HCT116 (cell line): ENCODE measurements at regions of chr10 and their contacts with region 1.

Region 1: GRCh38 chr10:97072851-97073665 is 112.7 kb downstream of the SLIT1 start:
- DNase-seq: peak; percentile 56
- ATAC-seq: peak; percentile 91
- H3K4me3 ChIP-seq: no peak overlapping the region
- H3K27ac ChIP-seq: no peak overlapping the region
- H3K4me1 ChIP-seq: peaks cover 0 to 10% of the 10 kb centered on the region in 2 experiments; a peak in 2 of 4 replicates
- H3K27me3 ChIP-seq: peaks cover 24% of the 10 kb centered on the region
- CTCF ChIP-seq: peak; percentile 89 to 94 (median 93)
- POLR2A ChIP-seq: no peak
- RAD21 ChIP-seq: peak; percentile 93

Region 2: GRCh38 chr10:96642973-96643372 is 430.1 kb before region 1 on chr10:
- CTCF ChIA-PET with region 1: interaction called, 13 read pairs
- POLR2A ChIA-PET with region 1: no interaction called
- RAD21 ChIA-PET with region 1: no interaction called
- intact Hi-C with region 1: no loop called
- DNase-seq: peak; percentile 31
- ATAC-seq: peak; percentile 68
- H3K4me3 ChIP-seq: no peak overlapping the region
- H3K27ac ChIP-seq: no peak overlapping the region
- H3K4me1 ChIP-seq: peaks cover 3 to 22% of the 10 kb centered on the region in 2 experiments; a peak in 3 of 4 replicates
- H3K27me3 ChIP-seq: no peaks in the 10 kb centered on the region
- CTCF ChIP-seq: peak; percentile 69 to 77 (median 71); a peak in 5 of 6 replicates
- POLR2A ChIP-seq: no peak
- RAD21 ChIP-seq: peak; percentile 80

Region 3: GRCh38 chr10:97037365-97038361 is 35.4 kb before region 1 on chr10:
- CTCF ChIA-PET with region 1: interaction called, 18 read pairs
- POLR2A ChIA-PET with region 1: no interaction called
- RAD21 ChIA-PET with region 1: interaction called, 5 read pairs
- intact Hi-C with region 1: no loop called
- DNase-seq: peak; percentile 89
- ATAC-seq: peak; percentile 93
- H3K4me3 ChIP-seq: peak overlapping the region; percentile 38 to 55
- H3K27ac ChIP-seq: no peak overlapping the region
- H3K4me1 ChIP-seq: peaks cover 7 to 15% of the 10 kb centered on the region in 2 experiments; a peak in 3 of 4 replicates
- H3K27me3 ChIP-seq: no peaks in the 10 kb centered on the region
- CTCF ChIP-seq: peak; percentile 82 to 96 (median 87)
- POLR2A ChIP-seq: no peak
- RAD21 ChIP-seq: peak; percentile 89

Region 4: DNA sequence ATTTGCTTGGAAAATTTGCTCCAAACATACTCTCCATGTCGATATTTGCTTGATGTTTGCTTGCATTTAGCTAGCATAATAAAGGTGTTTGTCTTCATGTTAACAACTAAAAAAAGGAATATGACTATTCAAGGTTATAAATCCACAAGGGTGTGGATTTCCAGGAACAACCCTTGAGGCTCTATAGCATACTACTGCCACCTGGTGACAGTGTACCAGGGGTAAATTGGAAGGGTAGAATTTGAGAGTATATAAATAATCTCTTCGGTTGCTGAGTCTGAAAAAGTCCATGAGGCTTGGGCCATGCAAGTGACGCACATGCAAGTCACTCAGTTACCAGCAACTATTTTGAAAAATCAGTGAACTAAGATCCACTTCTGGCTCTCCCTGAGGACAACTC is 44.3 kb after region 1 on chr10:
- CTCF ChIA-PET with region 1: interaction called, 48 read pairs
- POLR2A ChIA-PET with region 1: no interaction called
- RAD21 ChIA-PET with region 1: interaction called, 3 to 5 read pairs
- intact Hi-C with region 1: loop called (anchors 1 kb)
- DNase-seq: peak; percentile 16
- ATAC-seq: peak; percentile 80
- H3K4me3 ChIP-seq: no peak overlapping the region
- H3K27ac ChIP-seq: no peak overlapping the region
- H3K4me1 ChIP-seq: no peaks in the 10 kb centered on the region
- H3K27me3 ChIP-seq: peaks cover 24% of the 10 kb centered on the region; the same call in 1 of the 2 replicates
- CTCF ChIP-seq: peak; percentile 45 to 83 (median 67)
- POLR2A ChIP-seq: no peak
- RAD21 ChIP-seq: peak; percentile 81

Region 5: DNA sequence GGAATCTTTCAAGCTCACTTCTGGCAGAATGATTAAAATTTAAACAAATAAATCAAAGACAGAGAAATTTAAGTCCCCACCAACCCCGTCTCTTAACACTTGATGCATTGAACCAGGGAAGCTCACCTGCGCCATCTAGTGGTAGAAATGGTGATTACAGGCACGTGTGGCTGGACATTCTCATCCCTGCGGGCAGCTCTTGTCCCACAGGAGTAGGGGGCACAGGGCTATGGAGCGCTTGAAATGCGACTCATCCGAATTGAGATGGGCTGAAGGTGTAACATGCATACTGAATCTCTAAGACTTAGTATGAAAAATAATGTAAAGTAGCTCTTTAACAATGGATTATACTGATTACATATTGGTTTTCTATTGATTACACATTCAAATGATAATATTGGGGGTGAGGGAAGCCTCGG is 137.5 kb after region 1 on chr10:
- CTCF ChIA-PET with region 1: interaction called, 85 read pairs
- POLR2A ChIA-PET with region 1: interaction called, 3 read pairs
- RAD21 ChIA-PET with region 1: interaction called, 13 to 17 read pairs
- intact Hi-C with region 1: loop called (anchors 1 kb)
- DNase-seq: peak; percentile 54
- ATAC-seq: peak; percentile 91
- H3K4me3 ChIP-seq: no peak overlapping the region
- H3K27ac ChIP-seq: no peak overlapping the region
- H3K4me1 ChIP-seq: no peaks in the 10 kb centered on the region
- H3K27me3 ChIP-seq: 0 out of 2 replicates have a peak, but pooled peaks cover 5% of the 10 kb centered on the region
- CTCF ChIP-seq: peak; percentile 87 to 98 (median 93)
- POLR2A ChIP-seq: no peak
- RAD21 ChIP-seq: peak; percentile 82

Region 6: DNA sequence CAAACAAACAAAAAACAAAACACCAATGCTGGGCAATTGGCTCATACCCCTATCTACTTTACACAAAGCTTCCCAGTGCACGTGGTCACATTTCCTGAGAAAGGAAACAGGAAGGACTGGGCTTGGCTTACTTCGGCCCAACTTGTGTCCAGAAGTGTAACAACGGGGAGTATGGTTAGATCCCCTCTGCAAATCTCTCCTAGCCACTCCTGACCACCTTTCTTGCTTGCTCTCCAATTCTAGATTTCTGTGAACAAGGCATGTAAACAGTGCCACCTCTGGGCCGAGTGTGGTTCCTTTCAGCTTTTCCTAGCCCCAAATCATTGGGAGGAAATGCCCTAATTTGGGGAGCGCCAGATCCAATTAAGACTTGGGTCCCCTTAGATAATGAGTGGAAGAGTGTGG is 282.5 kb after region 1 on chr10:
- CTCF ChIA-PET with region 1: no interaction called
- POLR2A ChIA-PET with region 1: no interaction called
- RAD21 ChIA-PET with region 1: no interaction called
- intact Hi-C with region 1: loop called (anchors 5 kb)
- DNase-seq: no peak
- ATAC-seq: peak; percentile 51
- H3K4me3 ChIP-seq: no peak overlapping the region
- H3K27ac ChIP-seq: no peak overlapping the region
- H3K4me1 ChIP-seq: no peaks in the 10 kb centered on the region
- H3K27me3 ChIP-seq: no peaks in the 10 kb centered on the region
- CTCF ChIP-seq: peak; percentile 25 to 36 (median 31); a peak in 5 of 6 replicates
- POLR2A ChIP-seq: no peak
- RAD21 ChIP-seq: peak; percentile 63; the same call in 1 of the 2 replicates

Region 7: DNA sequence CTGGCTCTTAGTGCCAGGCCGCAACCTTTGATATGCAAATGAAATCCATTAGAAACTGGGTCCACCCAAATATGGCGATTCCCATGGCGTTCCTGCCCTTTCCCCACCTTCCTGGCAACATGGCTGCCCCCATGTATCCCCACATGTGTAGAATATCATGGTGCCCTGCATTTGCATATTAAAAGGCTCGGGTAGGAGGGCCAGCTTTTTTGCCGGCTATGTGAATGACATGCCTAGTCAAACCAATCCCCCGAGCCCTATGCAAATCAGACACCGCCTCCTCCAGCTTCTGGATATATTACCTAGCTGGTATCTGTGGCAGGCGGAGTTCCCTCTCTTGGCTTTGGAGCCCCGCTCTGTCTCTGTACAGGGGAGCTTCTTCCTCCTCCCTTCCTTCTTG is 406.9 kb after region 1 on chr10:
- CTCF ChIA-PET with region 1: no interaction called
- POLR2A ChIA-PET with region 1: no interaction called
- RAD21 ChIA-PET with region 1: no interaction called
- intact Hi-C with region 1: no loop called
- DNase-seq: no peak
- ATAC-seq: peak; percentile 49; the same call in 1 of the 2 replicates
- H3K4me3 ChIP-seq: no peak overlapping the region
- H3K27ac ChIP-seq: no peak overlapping the region
- H3K4me1 ChIP-seq: no peaks in the 10 kb centered on the region; a peak in 1 of 4 replicates
- H3K27me3 ChIP-seq: no peaks in the 10 kb centered on the region
- CTCF ChIP-seq: no peak
- POLR2A ChIP-seq: no peak
- RAD21 ChIP-seq: no peak